ENCODE measurements at regions of chr3 and their contacts with region 1.

Region 1: GRCh38 chr3:187738331-187739093 is 6.8 kb downstream of the BCL6 start:
- DNase-seq: peak; percentile 84
- ATAC-seq: peak; percentile 24
- H3K4me3 Mint-ChIP-seq: peak overlapping the region; percentile 100
- H3K27ac Mint-ChIP-seq: peak overlapping the region; percentile 100
- H3K4me1 Mint-ChIP-seq: peaks cover 53% of the 10 kb centered on the region
- H3K27me3 Mint-ChIP-seq: no peaks in the 10 kb centered on the region

Region 2: DNA sequence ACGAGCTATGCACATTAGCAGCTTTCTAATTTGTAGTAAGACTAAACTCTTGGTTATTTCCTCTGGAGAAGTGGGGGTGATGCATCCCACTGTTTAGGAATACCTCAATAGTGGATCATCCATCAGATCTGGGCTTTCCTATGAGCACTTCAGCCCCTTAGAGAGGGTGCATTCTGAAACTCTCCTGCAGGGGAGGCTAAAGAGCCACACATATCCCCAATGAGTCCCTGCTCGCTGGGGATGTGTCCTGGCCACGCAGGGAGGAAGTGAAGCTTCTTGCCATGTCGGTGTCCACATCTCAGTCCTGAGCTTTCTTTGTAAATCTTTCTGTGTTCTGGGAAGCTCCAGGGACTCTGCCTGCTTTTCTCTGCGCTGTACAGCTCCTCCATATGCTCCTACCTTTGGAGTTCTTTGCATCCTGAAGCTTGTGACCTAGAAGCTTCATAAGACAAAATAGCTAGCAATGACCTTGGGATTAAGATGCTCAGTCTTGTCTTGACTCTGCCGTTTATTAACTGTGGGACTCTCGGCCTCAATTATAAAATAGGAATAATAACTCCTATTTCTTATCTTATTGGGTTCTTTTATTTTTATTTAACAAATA is 418.7 kb before region 1 on chr3:
- CTCF ChIA-PET with region 1: no interaction called
- POLR2A ChIA-PET with region 1: no interaction called
- DNase-seq: peak; percentile 74
- ATAC-seq: peak; percentile 81
- H3K4me3 Mint-ChIP-seq: no peak overlapping the region
- H3K27ac Mint-ChIP-seq: no peak overlapping the region
- H3K4me1 Mint-ChIP-seq: peaks cover 11% of the 10 kb centered on the region
- H3K27me3 Mint-ChIP-seq: peaks cover 25% of the 10 kb centered on the region

Region 3: GRCh38 chr3:187929112-187929816 is 190.8 kb after region 1 on chr3:
- CTCF ChIA-PET with region 1: interaction called, 16 read pairs
- POLR2A ChIA-PET with region 1: interaction called, 3 read pairs
- DNase-seq: no peak
- ATAC-seq: peak; percentile 30
- H3K4me3 Mint-ChIP-seq: no peak overlapping the region
- H3K27ac Mint-ChIP-seq: no peak overlapping the region
- H3K4me1 Mint-ChIP-seq: peaks cover 36% of the 10 kb centered on the region
- H3K27me3 Mint-ChIP-seq: no peaks in the 10 kb centered on the region

Region 4: DNA sequence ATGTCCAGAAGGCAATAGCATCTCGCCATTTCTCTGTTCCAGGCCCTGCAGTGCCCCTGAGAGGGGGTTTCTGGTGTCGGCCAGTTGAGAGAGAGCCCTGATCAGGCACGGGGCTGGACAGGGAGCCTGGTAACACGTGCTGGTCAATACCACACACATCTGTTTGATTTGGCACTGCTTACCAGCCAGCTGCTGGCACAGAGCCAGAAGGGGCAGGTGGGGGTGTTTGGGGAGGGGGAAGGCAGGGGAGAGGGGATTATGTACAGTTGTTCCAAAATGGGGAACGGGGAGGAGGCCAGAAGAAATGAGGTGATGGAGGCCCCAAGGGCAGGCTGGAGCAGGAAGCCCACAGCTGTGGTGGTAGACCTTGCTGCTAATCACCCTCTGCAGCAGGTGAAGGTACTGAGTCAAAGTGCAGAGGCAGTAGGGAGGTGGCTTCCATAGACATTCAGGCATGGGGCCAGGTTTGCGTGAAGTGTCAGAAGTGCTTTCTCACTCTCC is 261.9 kb after region 1 on chr3:
- CTCF ChIA-PET with region 1: interaction called, 32 read pairs
- POLR2A ChIA-PET with region 1: interaction called, 52 read pairs
- DNase-seq: peak; percentile 43
- ATAC-seq: peak; percentile 54
- H3K4me3 Mint-ChIP-seq: peak overlapping the region; percentile 76
- H3K27ac Mint-ChIP-seq: peak overlapping the region; percentile 94
- H3K4me1 Mint-ChIP-seq: peaks cover 88% of the 10 kb centered on the region
- H3K27me3 Mint-ChIP-seq: no peaks in the 10 kb centered on the region

Region 5: GRCh38 chr3:188296761-188297612 is 558.5 kb after region 1 on chr3:
- CTCF ChIA-PET with region 1: interaction called, 29 read pairs
- POLR2A ChIA-PET with region 1: no interaction called
- DNase-seq: no peak
- ATAC-seq: no peak
- H3K4me3 Mint-ChIP-seq: no peak overlapping the region
- H3K27ac Mint-ChIP-seq: no peak overlapping the region
- H3K4me1 Mint-ChIP-seq: peaks cover 51% of the 10 kb centered on the region
- H3K27me3 Mint-ChIP-seq: no peaks in the 10 kb centered on the region

Region 6: GRCh38 chr3:188400494-188401243 is 662.2 kb after region 1 on chr3:
- CTCF ChIA-PET with region 1: interaction called, 32 read pairs
- POLR2A ChIA-PET with region 1: interaction called, 4 read pairs
- DNase-seq: peak; percentile 42
- ATAC-seq: peak; percentile 61
- H3K4me3 Mint-ChIP-seq: no peak overlapping the region
- H3K27ac Mint-ChIP-seq: peak overlapping the region; percentile 62
- H3K4me1 Mint-ChIP-seq: peaks cover 67% of the 10 kb centered on the region
- H3K27me3 Mint-ChIP-seq: no peaks in the 10 kb centered on the region

Region 7: GRCh38 chr3:188954590-188955208 is 1216.2 kb after region 1 on chr3:
- CTCF ChIA-PET with region 1: interaction called, 552 read pairs
- POLR2A ChIA-PET with region 1: interaction called, 40 read pairs
- DNase-seq: peak; percentile 80
- ATAC-seq: peak; percentile 69
- H3K4me3 Mint-ChIP-seq: no peak overlapping the region
- H3K27ac Mint-ChIP-seq: no peak overlapping the region
- H3K4me1 Mint-ChIP-seq: peaks cover 16% of the 10 kb centered on the region
- H3K27me3 Mint-ChIP-seq: no peaks in the 10 kb centered on the region

Measured in activated CD8-positive, alpha-beta T cell treated with anti-CD3 and anti-CD28 coated beads, Interleukin-2, amount 10 ng/mL, durations not matched to agents 7 days and 5 days (primary cell).